Activated CD8-positive, alpha-beta T cell treated with anti-CD3 and anti-CD28 coated beads, Interleukin-2, amount 10 ng/mL, durations not matched to agents 7 days and 5 days (primary cell): ENCODE measurements at regions of chrX and their contacts with region 1.

Region 1: DNA sequence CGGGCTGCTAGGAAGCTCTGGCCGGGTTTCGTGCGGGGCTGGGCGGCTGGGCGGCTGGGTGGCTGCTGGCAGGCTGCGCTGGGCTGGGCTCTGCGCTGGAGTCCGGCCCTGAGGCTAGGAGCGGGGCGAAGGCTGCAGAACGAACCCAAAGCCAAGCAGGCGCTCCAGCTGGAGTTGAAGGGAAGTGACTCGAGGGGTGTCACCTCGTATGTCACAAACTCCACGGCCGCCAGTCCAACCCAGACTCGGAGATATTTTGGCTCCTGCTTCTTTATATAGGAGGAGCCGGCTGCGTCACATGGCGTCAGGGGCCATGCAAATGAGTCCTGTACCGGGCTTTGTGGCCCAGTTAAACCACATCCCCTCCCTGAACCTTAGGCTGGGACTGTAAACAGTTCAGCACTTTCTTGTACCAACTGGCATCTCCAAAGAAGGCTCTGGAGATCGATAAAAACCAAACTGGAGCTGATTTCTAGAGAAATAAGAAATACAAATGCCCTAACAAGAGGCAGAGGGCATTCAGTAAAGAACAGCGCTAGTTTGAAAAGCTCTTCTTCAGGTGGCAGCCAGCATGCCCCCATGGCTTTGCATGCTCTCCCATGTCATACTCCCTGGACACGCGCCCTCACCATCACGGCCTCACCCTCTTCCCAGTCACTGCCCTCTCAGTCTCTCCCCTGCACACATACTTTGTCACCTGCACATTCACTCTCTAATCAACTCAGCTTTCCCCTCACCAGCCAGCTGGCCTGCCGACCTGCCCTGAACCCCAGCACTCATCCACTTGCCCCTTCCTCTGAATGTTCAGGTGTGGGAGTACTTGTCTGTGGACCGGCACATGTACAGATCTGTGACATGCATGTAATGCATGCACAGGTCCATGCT is 58.5 kb downstream of the TSC22D3 start:
- DNase-seq: peak; percentile 91
- ATAC-seq: peak; percentile 73
- H3K4me3 Mint-ChIP-seq: peak overlapping the region; percentile 90
- H3K27ac Mint-ChIP-seq: peak overlapping the region; percentile 88
- H3K4me1 Mint-ChIP-seq: peaks cover 35% of the 10 kb centered on the region
- H3K27me3 Mint-ChIP-seq: no peaks in the 10 kb centered on the region

Region 2: DNA sequence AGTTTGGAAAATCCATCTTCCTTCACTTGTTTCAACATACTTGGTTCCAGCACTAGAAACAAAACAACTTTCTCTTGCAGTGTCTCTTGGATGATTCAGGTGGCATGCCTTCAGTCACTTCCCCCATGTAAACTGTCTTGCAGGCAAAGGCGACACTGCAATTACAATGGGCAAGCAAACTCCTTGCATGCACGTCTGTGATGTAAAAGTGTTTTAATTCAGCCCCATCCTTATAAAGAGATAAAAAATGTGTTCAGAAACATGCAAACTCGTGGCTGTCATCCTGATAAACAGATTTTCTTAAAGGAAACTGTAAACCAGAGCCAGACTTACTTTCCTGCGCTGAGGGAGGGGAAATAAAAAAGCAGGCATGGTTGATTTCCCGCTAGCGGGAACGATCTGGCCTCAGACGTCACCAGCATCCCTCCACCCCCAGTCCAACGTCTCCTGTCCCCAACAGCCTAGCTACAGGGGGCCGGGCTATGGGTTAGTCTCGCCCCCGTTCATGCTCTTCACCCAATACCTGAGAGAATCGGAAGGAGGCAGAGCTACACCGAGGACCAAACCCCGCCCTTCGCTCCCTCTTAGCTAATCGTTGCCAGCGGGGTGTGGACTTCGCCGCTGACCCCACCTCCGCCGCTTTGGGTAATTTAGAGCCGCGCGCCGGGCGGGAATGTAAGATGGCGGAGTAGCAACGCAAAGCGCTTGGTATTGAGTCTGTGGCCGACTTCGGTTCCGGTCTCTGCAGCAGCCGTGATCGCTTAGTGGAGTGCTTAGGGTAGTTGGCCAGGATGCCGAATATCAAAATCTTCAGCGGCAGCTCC is 89.0 kb before region 1 on chrX and contains the start of gene PRPS1:
- CTCF ChIA-PET with region 1: interaction called, 5 read pairs
- POLR2A ChIA-PET with region 1: interaction called, 18 read pairs
- DNase-seq: peak; percentile 94
- ATAC-seq: peak; percentile 98
- H3K4me3 Mint-ChIP-seq: peak within 1 kb of the TSS; percentile 86
- H3K27ac Mint-ChIP-seq: peak within 1 kb of the TSS; percentile 96
- H3K4me1 Mint-ChIP-seq: peaks cover 26% of the 10 kb centered on the region
- H3K27me3 Mint-ChIP-seq: no peaks in the 10 kb centered on the region
- total RNA-seq, gene PRPS1: 69.8 to 71.3 TPM

Region 3: DNA sequence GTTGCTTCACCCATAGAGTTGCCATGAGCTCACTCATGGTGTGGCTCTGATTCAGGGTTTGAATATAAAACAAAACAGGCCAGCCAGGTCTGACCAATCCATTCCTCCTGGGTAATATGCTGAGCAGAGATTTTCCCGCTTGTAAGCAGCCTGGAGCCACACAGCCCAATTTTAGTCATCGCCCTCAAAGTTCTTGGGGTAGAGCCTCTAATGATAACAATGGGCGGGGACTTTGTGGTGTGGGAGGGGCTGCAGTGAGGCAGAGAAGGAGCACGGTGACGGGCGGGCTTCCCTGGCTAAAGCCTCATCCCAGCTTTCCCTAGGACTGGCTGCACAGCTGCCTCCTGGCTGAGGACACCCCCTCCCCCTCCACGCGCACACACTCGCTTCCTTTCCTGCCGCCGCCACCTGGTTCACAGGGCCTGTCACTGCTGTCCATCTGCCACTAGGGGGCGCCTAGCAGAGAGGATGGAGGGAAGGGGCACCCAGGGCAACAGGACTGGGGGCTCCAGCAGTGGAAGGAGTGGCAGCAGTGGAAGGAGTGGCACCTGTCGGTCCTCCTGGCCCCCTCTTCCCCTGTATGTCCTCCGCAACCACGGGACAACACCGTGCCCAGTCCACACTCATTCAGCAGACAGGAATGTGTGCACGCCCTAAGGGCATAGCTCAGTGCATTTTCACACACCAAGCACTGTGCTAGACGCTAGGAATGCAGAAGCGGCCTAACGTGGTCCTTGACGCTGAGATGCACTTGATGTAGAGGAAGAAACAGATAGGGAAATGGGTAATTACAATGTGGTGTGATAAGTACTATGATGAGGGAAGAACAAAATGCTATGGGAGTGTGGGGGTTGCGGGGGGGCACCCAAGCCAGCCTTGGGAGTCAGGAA is 61.9 kb before region 1 on chrX:
- CTCF ChIA-PET with region 1: interaction called, 26 read pairs
- POLR2A ChIA-PET with region 1: no interaction called
- DNase-seq: peak; percentile 73
- ATAC-seq: peak; percentile 70
- H3K4me3 Mint-ChIP-seq: no peak overlapping the region
- H3K27ac Mint-ChIP-seq: peak overlapping the region; percentile 30
- H3K4me1 Mint-ChIP-seq: peaks cover 10% of the 10 kb centered on the region
- H3K27me3 Mint-ChIP-seq: no peaks in the 10 kb centered on the region

Region 4: GRCh38 chrX:107672955-107673378 is 44.1 kb before region 1 on chrX:
- CTCF ChIA-PET with region 1: interaction called, 308 read pairs
- POLR2A ChIA-PET with region 1: interaction called, 292 read pairs
- DNase-seq: peak; percentile 83
- ATAC-seq: peak; percentile 39
- H3K4me3 Mint-ChIP-seq: peak overlapping the region; percentile 56
- H3K27ac Mint-ChIP-seq: peak overlapping the region; percentile 89
- H3K4me1 Mint-ChIP-seq: peaks cover 44% of the 10 kb centered on the region
- H3K27me3 Mint-ChIP-seq: no peaks in the 10 kb centered on the region

Region 5: DNA sequence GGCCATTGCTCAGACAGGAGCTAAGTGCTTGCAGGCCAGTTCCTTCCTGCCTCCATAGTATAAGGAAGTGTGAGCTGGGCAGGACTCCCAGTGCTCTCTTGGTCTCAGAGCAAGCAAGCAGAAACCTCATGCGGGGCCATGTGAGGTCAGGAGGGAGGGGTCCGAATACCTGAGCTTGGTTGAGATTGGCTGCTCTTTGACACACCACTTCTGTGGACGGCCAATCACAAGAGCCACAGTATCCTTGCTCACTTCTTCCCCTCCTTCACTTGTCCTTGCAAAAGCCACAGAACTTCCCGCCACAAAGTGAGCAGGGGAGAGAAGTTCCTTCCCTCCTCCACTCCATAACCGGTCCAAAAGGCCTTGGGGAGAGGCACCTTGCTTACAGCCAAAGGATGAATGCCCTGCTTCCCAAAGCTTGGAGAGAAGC is 32.1 kb before region 1 on chrX:
- CTCF ChIA-PET with region 1: interaction called, 3 read pairs
- POLR2A ChIA-PET with region 1: interaction called, 292 read pairs
- DNase-seq: peak; percentile 49
- ATAC-seq: peak; percentile 70
- H3K4me3 Mint-ChIP-seq: no peak overlapping the region
- H3K27ac Mint-ChIP-seq: peak overlapping the region; percentile 55
- H3K4me1 Mint-ChIP-seq: peaks cover 55% of the 10 kb centered on the region
- H3K27me3 Mint-ChIP-seq: no peaks in the 10 kb centered on the region

Region 6: DNA sequence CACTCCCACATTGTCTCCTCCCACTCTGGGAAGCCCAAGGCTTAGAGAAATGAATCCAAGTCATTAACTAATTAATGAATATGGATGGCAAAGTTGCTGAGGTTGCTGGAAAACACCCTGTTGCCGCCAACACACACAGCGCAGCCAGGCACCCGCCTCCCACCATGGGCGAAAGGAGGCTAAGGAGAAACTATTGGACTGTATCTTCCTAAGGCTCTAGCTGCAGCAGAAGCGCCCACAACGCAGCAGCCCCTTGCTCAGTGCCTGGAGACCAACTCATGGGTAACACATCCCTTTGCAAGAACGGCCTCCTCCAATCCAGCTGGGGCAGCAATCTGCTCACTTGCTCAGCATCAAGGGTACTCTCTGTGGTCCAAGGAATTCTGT is 24.3 kb after region 1 on chrX:
- CTCF ChIA-PET with region 1: interaction called, 15 read pairs
- POLR2A ChIA-PET with region 1: interaction called, 11 read pairs
- DNase-seq: no peak
- ATAC-seq: peak; percentile 20
- H3K4me3 Mint-ChIP-seq: peak overlapping the region; percentile 72
- H3K27ac Mint-ChIP-seq: peak overlapping the region; percentile 97
- H3K4me1 Mint-ChIP-seq: peaks cover 21% of the 10 kb centered on the region
- H3K27me3 Mint-ChIP-seq: no peaks in the 10 kb centered on the region

Region 7: DNA sequence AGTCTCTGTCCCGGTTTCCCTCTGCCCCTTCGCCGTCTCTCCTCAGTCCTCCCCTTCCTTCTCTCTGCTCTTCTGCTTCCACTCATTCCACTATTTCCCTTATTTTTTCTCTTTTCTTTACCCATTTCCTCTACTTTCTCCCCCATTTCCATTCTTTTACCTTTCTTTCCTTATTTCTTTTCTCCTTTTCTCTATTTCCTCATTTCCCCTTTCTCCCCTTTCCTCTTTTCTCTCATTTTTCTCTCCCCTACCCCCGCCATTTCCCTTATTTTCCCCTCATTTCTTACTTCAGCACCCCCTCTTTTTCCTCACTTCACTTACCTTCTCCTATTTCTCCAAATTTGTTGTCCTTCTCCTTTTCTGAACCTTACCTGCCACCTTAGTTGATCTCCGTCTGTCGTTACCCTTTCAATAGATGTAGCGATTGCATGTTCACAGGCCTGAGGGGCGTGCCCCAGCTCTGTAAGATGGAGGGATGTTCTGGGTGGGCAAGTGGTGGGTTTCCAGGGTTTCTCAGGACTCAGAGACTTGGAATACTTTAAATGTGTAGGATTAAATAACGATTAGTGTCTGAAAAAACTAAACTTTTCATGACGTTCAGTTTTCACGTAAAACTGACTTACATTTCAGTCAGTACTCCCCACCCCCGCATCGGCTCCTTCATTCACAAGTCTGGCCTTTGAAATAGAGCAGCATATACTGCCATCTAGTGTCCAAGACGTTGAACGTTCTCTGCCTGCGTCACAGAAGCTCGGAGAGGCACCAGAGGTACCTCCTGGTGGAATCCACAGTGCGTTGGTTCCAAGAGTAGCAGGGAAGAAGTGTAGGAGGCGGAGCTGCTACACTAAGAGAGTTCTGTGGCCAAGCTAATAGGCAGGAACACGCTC is 59.8 kb after region 1 on chrX:
- CTCF ChIA-PET with region 1: interaction called, 17 read pairs
- POLR2A ChIA-PET with region 1: interaction called, 14 read pairs
- DNase-seq: peak; percentile 82
- ATAC-seq: peak; percentile 81
- H3K4me3 Mint-ChIP-seq: peak overlapping the region; percentile 79
- H3K27ac Mint-ChIP-seq: peak overlapping the region; percentile 44
- H3K4me1 Mint-ChIP-seq: peaks cover 9% of the 10 kb centered on the region
- H3K27me3 Mint-ChIP-seq: peaks cover 4% of the 10 kb centered on the region

Region 8: DNA sequence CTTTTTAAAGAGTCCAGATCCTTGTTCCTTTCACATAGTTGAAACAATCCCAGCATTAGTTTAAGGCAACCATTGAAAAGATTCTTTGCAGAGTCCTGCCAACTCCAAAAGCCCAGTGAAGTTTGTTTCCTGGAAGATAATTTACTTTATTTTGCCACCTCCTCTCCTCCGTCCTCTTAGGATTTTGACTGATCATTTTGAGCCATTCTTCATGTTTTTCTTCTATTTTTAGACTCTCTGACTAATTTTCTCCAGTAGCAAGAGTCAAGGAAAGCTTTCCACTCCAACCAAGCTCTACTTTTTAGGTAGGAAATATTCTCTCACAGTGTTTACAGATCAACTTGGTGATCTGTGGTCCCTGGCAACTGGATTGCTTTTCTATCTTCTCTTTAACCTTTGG is 70.8 kb after region 1 on chrX:
- CTCF ChIA-PET with region 1: no interaction called
- POLR2A ChIA-PET with region 1: no interaction called
- DNase-seq: no peak
- ATAC-seq: no peak
- H3K4me3 Mint-ChIP-seq: no peak overlapping the region
- H3K27ac Mint-ChIP-seq: no peak overlapping the region
- H3K4me1 Mint-ChIP-seq: no peaks in the 10 kb centered on the region
- H3K27me3 Mint-ChIP-seq: peaks cover 12% of the 10 kb centered on the region